OCI-LY7 (cell line): ENCODE measurements at regions of chr13 and their contacts with region 1.

Region 1: GRCh38 chr13:24228852-24229458 is 68.4 kb downstream of the SPATA13 start:
- DNase-seq: peak; percentile 66
- H3K4me3 ChIP-seq: no peak overlapping the region
- H3K27ac ChIP-seq: no peak overlapping the region
- H3K4me1 ChIP-seq: no peaks in the 10 kb centered on the region
- CTCF ChIP-seq: peak; percentile 94

Region 2: GRCh38 chr13:23992781-23993679 is 235.9 kb before region 1 on chr13:
- CTCF ChIA-PET with region 1: no interaction called
- POLR2A ChIA-PET with region 1: no interaction called
- intact Hi-C with region 1: no loop called
- DNase-seq: no peak
- H3K4me3 ChIP-seq: no peak overlapping the region
- H3K27ac ChIP-seq: no peak overlapping the region
- H3K4me1 ChIP-seq: no peaks in the 10 kb centered on the region
- CTCF ChIP-seq: no peak

Region 3: GRCh38 chr13:24020375-24020830 is 208.6 kb before region 1 on chr13:
- CTCF ChIA-PET with region 1: interaction called, 14 read pairs
- POLR2A ChIA-PET with region 1: interaction called, 6 read pairs
- intact Hi-C with region 1: loop called (anchors 1 kb)
- DNase-seq: peak; percentile 57
- H3K4me3 ChIP-seq: no peak overlapping the region
- H3K27ac ChIP-seq: no peak overlapping the region
- H3K4me1 ChIP-seq: no peaks in the 10 kb centered on the region
- CTCF ChIP-seq: peak; percentile 90

Region 4: DNA sequence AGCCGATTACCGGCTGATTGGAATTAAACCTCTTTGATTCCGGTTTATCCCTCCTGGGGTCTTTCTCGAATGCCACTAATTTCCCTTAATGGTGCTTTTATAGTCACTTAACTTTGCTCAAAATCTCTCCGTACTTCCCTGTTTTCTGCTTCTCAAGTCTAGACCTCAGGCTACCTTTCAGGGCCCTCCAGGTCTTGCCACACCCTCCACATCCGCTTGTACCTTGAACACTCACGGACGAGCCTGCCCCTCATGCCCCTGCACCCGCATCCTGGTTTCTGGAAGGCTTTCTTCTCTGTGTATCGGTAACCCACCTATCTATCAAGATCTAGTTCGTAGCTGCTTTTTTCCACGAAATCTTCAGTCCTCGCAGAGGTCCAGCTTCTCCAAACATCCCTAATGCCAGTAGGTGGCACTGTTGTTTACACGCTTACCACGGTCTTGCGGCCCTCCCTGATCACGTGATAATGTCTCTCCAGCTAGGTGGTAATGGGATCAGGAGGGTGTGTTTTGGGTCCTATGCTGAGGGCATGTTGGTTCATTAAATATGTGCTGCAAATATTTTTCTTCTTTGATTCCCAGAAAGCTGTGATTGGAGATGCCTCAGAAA is 465.0 kb after region 1 on chr13:
- CTCF ChIA-PET with region 1: no interaction called
- POLR2A ChIA-PET with region 1: no interaction called
- intact Hi-C with region 1: no loop called
- DNase-seq: peak; percentile 82
- H3K4me3 ChIP-seq: no peak overlapping the region
- H3K27ac ChIP-seq: no peak overlapping the region
- H3K4me1 ChIP-seq: no peaks in the 10 kb centered on the region
- CTCF ChIP-seq: peak; percentile 94